Mammary epithelial cell (primary cell): ENCODE measurements at regions of chr21 and their contacts with region 1.

Region 1: GRCh38 chr21:33199516-33200217 is 30.1 kb upstream of the IFNAR2 start:
- DNase-seq: peak; percentile 86
- H3K4me3 ChIP-seq: no peak overlapping the region
- H3K27ac ChIP-seq: no peak overlapping the region
- H3K4me1 ChIP-seq: peaks cover 21% of the 10 kb centered on the region
- H3K27me3 ChIP-seq: no peaks in the 10 kb centered on the region
- CTCF ChIP-seq: peak; percentile 67 to 79

Region 2: GRCh38 chr21:32940079-32941014 is 259.3 kb before region 1 on chr21:
- CTCF ChIA-PET with region 1: interaction called, 3 read pairs
- dilution Hi-C with region 1: no loop called
- in situ Hi-C with region 1: loop called in 1 of 2 experiments (anchors 10 kb)
- intact Hi-C with region 1: loop called (anchors 1 kb)
- DNase-seq: peak; percentile 26
- H3K4me3 ChIP-seq: no peak overlapping the region
- H3K27ac ChIP-seq: no peak overlapping the region
- H3K4me1 ChIP-seq: no peaks in the 10 kb centered on the region
- H3K27me3 ChIP-seq: no peaks in the 10 kb centered on the region
- CTCF ChIP-seq: peak; percentile 82 to 83

Region 3: GRCh38 chr21:33266050-33266788 is 66.6 kb after region 1 on chr21 and contains the start of gene IL10RB:
- CTCF ChIA-PET with region 1: no interaction called
- dilution Hi-C with region 1: no loop called
- in situ Hi-C with region 1: no loop called
- intact Hi-C with region 1: loop called (anchors 2 kb)
- DNase-seq: peak; percentile 56
- H3K4me3 ChIP-seq: peak within 1 kb of the TSS; percentile 87 to 90 (median 87)
- H3K27ac ChIP-seq: peak within 1 kb of the TSS; percentile 59
- H3K4me1 ChIP-seq: peaks cover 18% of the 10 kb centered on the region
- H3K27me3 ChIP-seq: no peaks in the 10 kb centered on the region
- CTCF ChIP-seq: no peak
- total RNA-seq, gene IL10RB: 14.3 to 18.9 TPM

Region 4: GRCh38 chr21:33360881-33361602 is 161.4 kb after region 1 on chr21:
- CTCF ChIA-PET with region 1: interaction called, 15 read pairs
- dilution Hi-C with region 1: no loop called
- in situ Hi-C with region 1: loop called in 1 of 2 experiments (anchors 5 kb)
- intact Hi-C with region 1: loop called (anchors 1 kb)
- DNase-seq: peak; percentile 65
- H3K4me3 ChIP-seq: peak overlapping the region in 2 of 3 experiments; percentile 1 to 8
- H3K27ac ChIP-seq: no peak overlapping the region
- H3K4me1 ChIP-seq: peaks cover 17% of the 10 kb centered on the region
- H3K27me3 ChIP-seq: no peaks in the 10 kb centered on the region
- CTCF ChIP-seq: peak; percentile 89 to 98

Region 5: GRCh38 chr21:33419538-33420123 is 220.0 kb after region 1 on chr21:
- CTCF ChIA-PET with region 1: no interaction called
- dilution Hi-C with region 1: no loop called
- in situ Hi-C with region 1: no loop called
- intact Hi-C with region 1: no loop called
- DNase-seq: peak; percentile 27
- H3K4me3 ChIP-seq: no peak overlapping the region
- H3K27ac ChIP-seq: no peak overlapping the region
- H3K4me1 ChIP-seq: no peaks in the 10 kb centered on the region
- H3K27me3 ChIP-seq: no peaks in the 10 kb centered on the region
- CTCF ChIP-seq: no peak

Region 6: DNA sequence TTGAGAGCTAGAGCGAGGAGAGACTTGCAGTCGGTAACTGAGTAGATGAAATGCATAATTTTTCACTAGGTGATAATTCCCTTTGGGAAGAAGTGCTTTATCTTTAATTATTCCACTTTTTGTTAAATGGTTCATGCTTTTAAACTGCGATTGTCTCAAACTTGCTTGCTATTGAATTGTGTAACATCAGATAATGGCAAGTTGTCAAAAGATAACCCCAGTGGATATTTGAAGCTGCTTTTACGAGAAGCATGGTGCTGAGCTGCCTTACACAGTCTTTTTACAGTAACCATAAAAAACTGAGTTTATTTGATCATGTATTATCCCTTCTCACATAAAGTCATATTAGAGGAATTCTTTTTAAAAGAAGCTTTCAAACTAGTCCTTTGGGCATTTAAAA is 249.9 kb after region 1 on chr21:
- CTCF ChIA-PET with region 1: interaction called, 4 read pairs
- dilution Hi-C with region 1: loop called (anchors 5 kb)
- in situ Hi-C with region 1: loop called (anchors 5 to 10 kb)
- intact Hi-C with region 1: loop called (anchors 1 kb)
- DNase-seq: no peak
- H3K4me3 ChIP-seq: no peak overlapping the region
- H3K27ac ChIP-seq: no peak overlapping the region
- H3K4me1 ChIP-seq: peaks cover 14% of the 10 kb centered on the region
- H3K27me3 ChIP-seq: no peaks in the 10 kb centered on the region
- CTCF ChIP-seq: no peak